Aorta (tissue), 5 donors: ENCODE measurements at regions of chr10 and their contacts with region 1.

Region 1: GRCh38 chr10:123380497-123381085 is 226.4 kb downstream of the BUB3 start:
- DNase-seq: no peak
- ATAC-seq: no peak
- H3K4me3 ChIP-seq: no peak overlapping the region
- H3K27ac ChIP-seq: no peak overlapping the region
- H3K4me1 ChIP-seq: no peaks in the 10 kb centered on the region
- H3K27me3 ChIP-seq: no peaks in the 10 kb centered on the region

Region 2: GRCh38 chr10:123132576-123133477 is 247.8 kb before region 1 on chr10:
- intact Hi-C with region 1: loop called in 1 of 2 experiments (anchors 10 kb)
- DNase-seq: peak; percentile 89 to 94
- ATAC-seq: peak; percentile 84
- H3K4me3 ChIP-seq: no peak overlapping the region
- H3K27ac ChIP-seq: no peak overlapping the region
- H3K4me1 ChIP-seq: no peaks in the 10 kb centered on the region
- H3K27me3 ChIP-seq: peaks cover 0 to 5% of the 10 kb centered on the region in 2 donors

Region 3: DNA sequence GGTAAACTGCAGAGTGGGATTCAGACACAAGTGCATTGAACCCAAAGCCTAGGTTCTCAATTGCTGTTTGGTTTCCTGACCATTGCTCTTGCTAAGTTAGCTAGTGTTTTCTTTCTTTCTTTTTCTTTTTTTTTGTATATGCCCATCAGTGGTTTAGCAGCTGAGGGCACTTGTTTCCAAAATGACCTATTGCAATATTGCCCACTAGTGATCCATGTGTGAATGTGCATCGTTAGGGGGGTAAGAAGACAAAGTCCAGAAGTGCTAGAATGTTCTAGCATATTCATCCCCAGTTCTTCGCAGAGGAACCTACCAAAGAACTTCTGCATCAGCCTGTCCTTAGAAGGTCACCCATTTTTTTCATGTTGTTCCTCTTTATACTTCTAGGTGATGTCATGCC is 32.8 kb after region 1 on chr10:
- intact Hi-C with region 1: no loop called
- DNase-seq: no peak
- ATAC-seq: no peak
- H3K4me3 ChIP-seq: no peak overlapping the region
- H3K27ac ChIP-seq: no peak overlapping the region
- H3K4me1 ChIP-seq: no peaks in the 10 kb centered on the region
- H3K27me3 ChIP-seq: no peaks in the 10 kb centered on the region

Region 4: GRCh38 chr10:123743976-123744411 is 363.4 kb after region 1 on chr10:
- intact Hi-C with region 1: no loop called
- DNase-seq: no peak
- ATAC-seq: no peak
- H3K4me3 ChIP-seq: no peak overlapping the region
- H3K27ac ChIP-seq: no peak overlapping the region
- H3K4me1 ChIP-seq: no peaks in the 10 kb centered on the region
- H3K27me3 ChIP-seq: no peaks in the 10 kb centered on the region